Head of caudate nucleus (tissue), 42 donors: ENCODE measurements at regions of chr5 and their contacts with region 1.

Region 1: GRCh38 chr5:14364576-14365472 is 216.8 kb upstream of the OTULINL start:
- DNase-seq: peak in 20 of 42 donors; percentile 20 to 63 (median 44)

Region 2: GRCh38 chr5:14664302-14665100 is 299.7 kb after region 1 on chr5 and contains the start of gene OTULIN:
- intact Hi-C with region 1: loop called (anchors 10 kb)
- DNase-seq: peak; percentile 72 to 96 (median 91)